ENCODE measurements at regions of chr14 and their contacts with region 1.

Region 1: GRCh38 chr14:53539489-53540126 is 386.5 kb upstream of the DDHD1 start:
- DNase-seq: peak; percentile 67 to 80
- H3K4me3 ChIP-seq: no peak overlapping the region
- H3K27ac ChIP-seq: peak overlapping the region; percentile 23 to 29
- H3K4me1 ChIP-seq: no peaks in the 10 kb centered on the region
- H3K27me3 ChIP-seq: no peaks in the 10 kb centered on the region
- CTCF ChIP-seq: peak; percentile 74 to 79 (median 76)
- POLR2A ChIP-seq: no peak

Region 2: GRCh38 chr14:53570411-53571387 is 31.1 kb after region 1 on chr14:
- intact Hi-C with region 1: no loop called
- DNase-seq: no peak
- H3K4me3 ChIP-seq: no peak overlapping the region
- H3K27ac ChIP-seq: peak overlapping the region in 1 of 2 donors; percentile 28
- H3K4me1 ChIP-seq: no peaks in the 10 kb centered on the region
- H3K27me3 ChIP-seq: no peaks in the 10 kb centered on the region
- CTCF ChIP-seq: no peak
- POLR2A ChIP-seq: no peak

Region 3: DNA sequence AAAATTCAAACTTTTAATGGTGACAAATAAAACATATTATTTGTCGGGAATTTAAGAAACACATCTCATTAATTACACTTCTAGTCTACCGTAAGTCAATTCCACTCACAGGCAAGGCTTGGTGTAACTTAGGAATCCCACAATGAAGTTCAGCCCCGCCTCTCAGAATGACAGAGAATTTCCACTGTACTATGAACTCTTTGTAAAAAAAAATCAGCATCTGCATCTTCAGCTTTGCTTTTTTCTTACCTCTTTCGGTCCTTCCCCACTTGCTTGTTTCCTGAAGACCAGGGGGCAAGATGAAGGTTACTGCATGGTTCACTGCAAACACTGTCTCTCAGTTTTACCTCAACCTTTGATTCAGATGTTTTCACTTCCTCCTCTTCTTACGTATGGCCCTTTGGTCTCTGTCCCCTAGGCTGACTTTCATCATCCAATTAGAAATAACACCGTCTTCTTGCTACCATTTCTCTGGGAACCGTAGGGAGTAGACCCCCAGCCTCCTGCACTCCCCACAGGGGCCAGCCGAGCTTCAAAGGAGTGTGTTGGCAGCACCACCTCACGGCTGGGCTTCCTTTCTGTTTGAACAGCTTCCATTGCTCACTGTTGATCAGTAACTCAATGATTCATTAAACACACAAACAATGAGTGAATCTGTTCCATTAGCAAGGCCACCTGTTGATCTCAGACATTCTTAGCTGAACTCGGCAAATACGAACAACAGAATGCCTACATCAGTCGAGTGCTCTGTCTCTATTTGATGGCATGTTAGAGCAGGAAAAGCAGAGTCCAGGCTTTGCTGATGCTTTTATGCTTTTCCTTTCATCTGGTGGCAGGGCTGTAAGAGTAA is 74.0 kb after region 1 on chr14:
- intact Hi-C with region 1: no loop called
- DNase-seq: no peak
- H3K4me3 ChIP-seq: no peak overlapping the region
- H3K27ac ChIP-seq: no peak overlapping the region
- H3K4me1 ChIP-seq: no peaks in the 10 kb centered on the region
- H3K27me3 ChIP-seq: no peaks in the 10 kb centered on the region
- CTCF ChIP-seq: no peak
- POLR2A ChIP-seq: no peak

Region 4: GRCh38 chr14:54173802-54174201 is 634.2 kb after region 1 on chr14:
- intact Hi-C with region 1: loop called (anchors 5 kb)
- DNase-seq: no peak
- H3K4me3 ChIP-seq: no peak overlapping the region
- H3K27ac ChIP-seq: peak overlapping the region in 1 of 2 donors; percentile 48
- H3K4me1 ChIP-seq: no peaks in the 10 kb centered on the region
- H3K27me3 ChIP-seq: no peaks in the 10 kb centered on the region
- CTCF ChIP-seq: no peak
- POLR2A ChIP-seq: no peak